ENCODE measurements at regions of chr1 and their contacts with region 1.

Region 1: GRCh38 chr1:147434921-147435320 is 106.4 kb upstream of the BCL9 start:
- DNase-seq: no peak
- ATAC-seq: no peak
- H3K4me3 Mint-ChIP-seq: no peak overlapping the region
- H3K27ac Mint-ChIP-seq: no peak overlapping the region
- H3K4me1 Mint-ChIP-seq: no peaks in the 10 kb centered on the region
- H3K27me3 Mint-ChIP-seq: peaks cover 6% of the 10 kb centered on the region; the same call in 1 of the 2 replicates
- CTCF ChIP-seq: no peak

Region 2: DNA sequence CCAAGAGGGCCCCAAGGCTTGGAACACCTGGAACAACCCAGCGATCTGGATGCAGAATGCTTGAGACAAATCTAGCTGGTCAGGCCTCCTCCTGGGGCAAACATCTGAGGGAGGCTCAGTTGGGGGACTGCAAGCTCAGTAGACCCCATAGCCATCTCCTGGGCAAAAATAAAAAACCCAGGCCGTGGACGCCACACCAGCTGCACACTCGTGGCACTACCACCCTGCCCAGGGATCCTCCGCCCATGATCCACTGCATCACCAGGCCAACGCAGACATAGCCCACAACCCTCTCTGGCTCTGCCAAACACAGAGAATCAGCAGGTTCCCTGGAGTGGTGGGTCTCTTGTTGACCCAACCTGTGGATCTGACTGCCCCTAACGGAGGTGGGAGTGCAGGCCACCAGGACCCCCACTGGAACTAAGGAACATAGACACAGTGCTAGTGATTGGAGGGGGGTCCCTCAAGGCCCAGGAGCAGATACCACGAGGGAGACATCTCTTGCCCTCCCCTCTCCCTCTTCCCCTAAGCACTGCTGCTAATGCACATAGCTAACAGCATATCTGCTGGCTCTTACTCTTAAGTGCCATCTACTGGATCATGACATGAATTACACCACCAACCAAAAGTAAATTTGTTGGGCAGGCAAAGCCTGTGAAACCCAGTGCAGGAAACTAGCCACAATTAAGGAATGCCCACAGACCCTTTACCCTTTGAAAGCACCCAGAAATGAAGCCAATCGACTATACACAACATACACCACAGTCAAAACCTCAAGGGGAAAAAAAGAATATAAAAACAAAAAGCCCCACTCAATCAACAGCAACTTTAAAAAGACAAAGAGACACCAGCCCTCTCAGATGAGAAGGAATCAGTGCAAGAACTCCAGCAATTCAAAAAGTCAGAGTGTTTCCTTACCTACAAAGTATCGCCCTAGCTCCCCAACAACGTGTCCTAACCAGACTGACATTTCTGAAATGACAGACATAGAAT is 45.1 kb before region 1 on chr1:
- CTCF ChIA-PET with region 1: interaction called, 10 read pairs
- POLR2A ChIA-PET with region 1: no interaction called
- DNase-seq: no peak
- ATAC-seq: peak; percentile 95
- H3K4me3 Mint-ChIP-seq: no peak overlapping the region
- H3K27ac Mint-ChIP-seq: peak overlapping the region; percentile 61
- H3K4me1 Mint-ChIP-seq: peaks cover 7% of the 10 kb centered on the region
- H3K27me3 Mint-ChIP-seq: no peaks in the 10 kb centered on the region; the same call in 1 of the 2 replicates
- CTCF ChIP-seq: peak; percentile 60